ENCODE measurements at regions of chr11 and their contacts with region 1.

Region 1: GRCh38 chr11:66694732-66695207 is 17.1 kb upstream of the RBM4B start:
- DNase-seq: peak; percentile 70 to 96 (median 86)

Region 2: DNA sequence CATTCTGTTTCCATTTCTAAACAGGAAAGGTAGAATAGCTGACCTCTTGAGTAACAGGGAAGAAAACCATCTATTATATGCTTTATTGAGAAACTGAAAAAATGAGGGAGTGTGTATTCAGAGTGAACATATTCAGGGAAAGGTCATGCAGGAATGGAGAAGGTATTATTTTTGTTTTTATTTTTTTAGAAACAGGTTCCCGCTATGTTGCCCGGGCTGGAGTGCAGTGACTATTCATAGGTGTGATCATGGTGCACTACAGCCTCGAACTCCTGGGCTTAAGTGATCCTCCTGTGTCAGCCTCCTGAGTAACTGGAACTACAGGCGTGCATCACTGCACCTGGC is 139.7 kb after region 1 on chr11:
- intact Hi-C with region 1: loop called (anchors 1 kb)
- DNase-seq: peak in 1 of 10 donors; percentile 15

Region 3: GRCh38 chr11:66883016-66883968 is 188.5 kb after region 1 on chr11:
- intact Hi-C with region 1: loop called (anchors 5 kb)
- DNase-seq: peak; percentile 73 to 97 (median 89)

Region 4: GRCh38 chr11:67095214-67095507 is 400.4 kb after region 1 on chr11:
- intact Hi-C with region 1: no loop called
- DNase-seq: no peak

Measured in posterior cingulate gyrus (tissue), 11 donors.